Heart left ventricle (tissue), 16 donors: ENCODE measurements at regions of chr14 and their contacts with region 1.

Region 1: DNA sequence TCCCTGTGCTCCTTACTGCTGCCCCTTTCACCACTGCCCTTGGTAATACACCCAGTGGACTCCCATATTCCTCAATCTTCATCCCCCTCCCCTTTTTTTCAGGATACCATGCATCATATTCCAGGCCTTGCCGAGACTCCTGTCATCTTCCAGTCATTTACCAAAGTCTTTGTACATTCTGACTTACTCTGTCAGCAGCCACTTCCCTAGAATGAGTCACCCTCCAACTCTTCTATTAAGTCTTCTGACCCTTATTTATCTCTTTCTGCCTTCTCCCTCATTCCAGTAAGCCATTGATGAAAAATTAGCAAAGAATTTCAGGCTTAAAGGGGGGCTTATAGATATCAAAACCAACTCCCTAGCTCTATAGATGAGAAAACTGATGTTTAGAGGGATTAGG is 128.0 kb downstream of the STXBP6 start:
- DNase-seq: no peak
- ATAC-seq: peak in 2 of 4 donors; percentile 38 to 47
- H3K4me3 ChIP-seq: no peak overlapping the region
- H3K27ac ChIP-seq: peak overlapping the region in 3 of 12 donors; percentile 20 to 34 (median 21)
- H3K4me1 ChIP-seq: peaks cover 0 to 65% (median 10%) of the 10 kb centered on the region in 12 donors
- H3K27me3 ChIP-seq: no peaks in the 10 kb centered on the region
- CTCF ChIP-seq: no peak
- POLR2A ChIP-seq: no peak

Region 2: GRCh38 chr14:24868389-24868788 is 53.5 kb before region 1 on chr14:
- intact Hi-C with region 1: loop called in 1 of 10 experiments (anchors 2 kb)
- DNase-seq: no peak
- ATAC-seq: no peak
- H3K4me3 ChIP-seq: no peak overlapping the region
- H3K27ac ChIP-seq: no peak overlapping the region
- H3K4me1 ChIP-seq: peaks cover 0 to 33% (median 4%) of the 10 kb centered on the region in 12 donors
- H3K27me3 ChIP-seq: no peaks in the 10 kb centered on the region
- CTCF ChIP-seq: no peak
- POLR2A ChIP-seq: no peak